PC-9 (cell line): ENCODE measurements at regions of chr5 and their contacts with region 1.

Region 1: GRCh38 chr5:1111727-1112289 is at the start of gene SLC12A7:
- DNase-seq: peak; percentile 61 to 92
- H3K4me3 ChIP-seq: peak within 1 kb of the TSS; percentile 84
- H3K27ac ChIP-seq: peak within 1 kb of the TSS; percentile 62
- H3K4me1 ChIP-seq: peaks cover 32% of the 10 kb centered on the region
- H3K27me3 ChIP-seq: no peaks in the 10 kb centered on the region
- CTCF ChIP-seq: no peak
- total RNA-seq, gene SLC12A7: 174 and 207 TPM in 2 replicates

Region 2: DNA sequence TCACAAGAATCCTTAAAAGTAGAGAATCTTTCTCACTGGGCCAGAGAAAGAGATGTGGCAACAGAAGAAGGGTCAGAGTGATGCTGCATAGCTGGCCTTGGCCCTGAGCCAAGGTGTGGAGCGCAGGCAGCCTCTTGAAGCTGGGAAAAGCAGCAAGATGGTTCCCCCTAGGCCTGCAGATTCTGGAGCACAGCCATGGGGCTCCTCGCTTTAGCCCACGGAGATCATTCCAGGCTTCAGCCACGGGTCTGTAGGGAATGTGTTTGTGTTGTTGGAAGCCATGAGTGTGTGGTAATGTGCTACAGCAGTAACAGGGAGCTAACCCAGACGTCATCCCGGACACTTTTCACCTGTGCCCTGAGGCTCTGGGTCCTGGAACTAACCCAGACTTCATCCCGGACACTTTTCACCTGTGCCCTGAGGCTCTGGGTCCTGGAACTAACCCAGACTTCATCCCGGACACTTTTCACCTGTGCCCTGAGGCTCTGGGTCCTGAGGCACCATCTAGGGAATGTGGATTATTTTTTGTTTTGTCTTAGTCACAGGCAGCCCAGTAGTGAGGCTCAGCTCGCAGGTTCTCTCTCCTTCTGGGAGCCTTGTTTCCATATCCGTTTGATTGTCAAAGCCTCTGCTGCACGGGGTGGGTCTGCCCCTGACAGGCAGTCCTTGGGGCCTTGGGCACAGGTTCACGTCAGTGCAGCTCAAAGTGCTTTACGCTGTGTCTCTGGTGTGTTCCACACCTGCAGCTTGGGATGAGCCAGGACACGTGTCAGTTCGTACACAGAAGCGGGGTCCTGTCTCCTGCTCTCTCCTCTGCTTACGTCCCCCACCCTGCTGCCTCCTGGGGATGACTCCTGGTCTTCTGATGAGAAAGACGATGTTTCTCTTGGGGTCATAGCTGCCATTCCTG is 725.1 kb before region 1 on chr5:
- CTCF ChIA-PET with region 1: no interaction called
- POLR2A ChIA-PET with region 1: no interaction called
- intact Hi-C with region 1: loop called (anchors 10 kb)
- DNase-seq: peak; percentile 87 to 96
- H3K4me3 ChIP-seq: no peak overlapping the region
- H3K27ac ChIP-seq: no peak overlapping the region
- H3K4me1 ChIP-seq: peaks cover 26% of the 10 kb centered on the region
- H3K27me3 ChIP-seq: no peaks in the 10 kb centered on the region
- CTCF ChIP-seq: no peak

Region 3: DNA sequence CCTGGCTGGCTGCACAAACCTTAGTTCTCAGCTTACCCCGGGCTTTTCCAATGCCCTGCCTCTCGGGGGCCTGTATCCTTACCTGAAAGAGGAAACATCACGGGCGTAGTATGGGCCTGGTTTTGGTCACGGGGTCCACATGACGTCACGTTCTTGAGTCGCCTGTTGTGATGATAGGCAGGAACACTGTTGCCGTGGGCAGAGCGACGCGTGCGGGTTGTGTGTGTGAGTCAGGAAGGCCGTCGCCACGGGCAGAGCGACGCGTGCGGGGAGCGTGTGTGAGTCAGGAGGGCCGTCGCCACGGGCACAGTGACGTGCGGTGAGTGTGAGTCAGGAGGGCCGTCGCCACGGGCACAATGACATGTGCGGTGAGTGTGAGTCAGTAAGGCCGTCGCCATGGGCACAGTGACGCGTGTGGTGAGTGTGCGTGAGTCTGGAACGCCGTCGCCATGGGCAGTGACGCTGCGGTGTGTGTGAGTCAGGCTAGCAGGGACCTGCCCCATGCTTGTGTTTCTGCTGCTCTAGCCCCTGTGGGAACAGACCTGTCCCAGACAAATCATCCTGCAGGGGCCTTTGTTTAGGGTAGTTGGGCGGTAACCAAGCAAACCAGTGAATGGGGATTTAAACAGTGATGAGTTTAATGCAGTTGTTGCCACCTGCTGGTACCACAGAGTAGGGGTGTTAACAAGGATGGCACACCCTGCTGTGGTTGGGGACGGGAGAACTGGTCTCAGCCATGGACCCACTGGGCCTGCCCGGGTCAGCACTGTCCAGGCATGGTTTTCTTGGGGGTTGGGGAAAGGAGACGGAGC is 199.3 kb before region 1 on chr5:
- CTCF ChIA-PET with region 1: no interaction called
- POLR2A ChIA-PET with region 1: no interaction called
- intact Hi-C with region 1: loop called (anchors 1 kb)
- DNase-seq: peak; percentile 95 to 99
- H3K4me3 ChIP-seq: peak overlapping the region; percentile 30; the same call in 1 of the 2 replicates
- H3K27ac ChIP-seq: peak overlapping the region; percentile 79
- H3K4me1 ChIP-seq: peaks cover 14% of the 10 kb centered on the region
- H3K27me3 ChIP-seq: no peaks in the 10 kb centered on the region
- CTCF ChIP-seq: peak; percentile 70

Region 4: GRCh38 chr5:1130218-1130946 is 18.6 kb after region 1 on chr5:
- CTCF ChIA-PET with region 1: interaction called, 16 read pairs
- POLR2A ChIA-PET with region 1: interaction called, 77 read pairs
- intact Hi-C with region 1: loop called (anchors 1 kb)
- DNase-seq: peak; percentile 97 to 99
- H3K4me3 ChIP-seq: peak overlapping the region; percentile 45; the same call in 1 of the 2 replicates
- H3K27ac ChIP-seq: peak overlapping the region; percentile 82
- H3K4me1 ChIP-seq: peaks cover 57% of the 10 kb centered on the region
- H3K27me3 ChIP-seq: no peaks in the 10 kb centered on the region
- CTCF ChIP-seq: peak; percentile 27; the same call in 1 of the 2 replicates

Region 5: DNA sequence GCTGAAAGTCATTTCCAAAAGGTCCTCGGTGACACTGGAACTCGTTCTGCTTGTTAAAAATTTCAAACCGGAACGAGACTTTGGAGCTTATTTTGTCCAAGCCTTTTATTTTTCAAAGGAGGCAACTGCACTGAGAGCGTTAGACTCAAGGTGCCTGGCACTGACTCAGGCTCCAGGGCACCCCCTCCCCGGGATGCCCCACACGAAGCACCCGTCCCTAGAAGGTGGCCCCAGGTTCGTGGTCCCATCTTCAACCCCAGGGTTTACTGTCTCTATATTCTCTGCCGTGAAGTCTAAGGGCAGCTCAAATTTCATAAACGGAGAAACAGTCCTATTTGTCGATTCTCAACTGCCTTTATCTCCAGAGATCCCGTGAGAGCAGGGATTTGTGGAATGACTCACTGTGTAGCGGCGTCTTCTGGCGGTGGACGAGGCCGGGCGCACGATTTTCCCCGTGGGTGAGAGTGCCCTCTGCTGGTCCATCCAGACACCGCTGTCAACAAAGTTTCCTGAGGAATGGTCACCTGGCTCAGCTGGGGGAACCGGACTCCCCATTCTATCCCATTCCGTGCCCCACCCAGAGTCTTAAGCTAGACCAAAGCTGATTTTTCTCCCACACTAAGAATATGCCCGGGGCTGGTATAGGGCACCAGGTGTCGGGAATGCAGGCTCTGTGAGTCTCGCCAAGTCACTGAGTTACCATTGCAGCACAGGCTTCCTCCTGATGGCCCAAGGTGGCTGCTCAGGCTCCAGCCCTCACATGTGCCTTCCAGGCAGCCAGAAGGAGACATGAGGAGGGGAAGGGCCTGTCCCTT is 62.5 kb after region 1 on chr5:
- CTCF ChIA-PET with region 1: no interaction called
- POLR2A ChIA-PET with region 1: no interaction called
- intact Hi-C with region 1: no loop called
- DNase-seq: peak; percentile 77 to 88
- H3K4me3 ChIP-seq: no peak overlapping the region
- H3K27ac ChIP-seq: no peak overlapping the region
- H3K4me1 ChIP-seq: no peaks in the 10 kb centered on the region
- H3K27me3 ChIP-seq: peaks cover 89% of the 10 kb centered on the region
- CTCF ChIP-seq: peak; percentile 95

Region 6: DNA sequence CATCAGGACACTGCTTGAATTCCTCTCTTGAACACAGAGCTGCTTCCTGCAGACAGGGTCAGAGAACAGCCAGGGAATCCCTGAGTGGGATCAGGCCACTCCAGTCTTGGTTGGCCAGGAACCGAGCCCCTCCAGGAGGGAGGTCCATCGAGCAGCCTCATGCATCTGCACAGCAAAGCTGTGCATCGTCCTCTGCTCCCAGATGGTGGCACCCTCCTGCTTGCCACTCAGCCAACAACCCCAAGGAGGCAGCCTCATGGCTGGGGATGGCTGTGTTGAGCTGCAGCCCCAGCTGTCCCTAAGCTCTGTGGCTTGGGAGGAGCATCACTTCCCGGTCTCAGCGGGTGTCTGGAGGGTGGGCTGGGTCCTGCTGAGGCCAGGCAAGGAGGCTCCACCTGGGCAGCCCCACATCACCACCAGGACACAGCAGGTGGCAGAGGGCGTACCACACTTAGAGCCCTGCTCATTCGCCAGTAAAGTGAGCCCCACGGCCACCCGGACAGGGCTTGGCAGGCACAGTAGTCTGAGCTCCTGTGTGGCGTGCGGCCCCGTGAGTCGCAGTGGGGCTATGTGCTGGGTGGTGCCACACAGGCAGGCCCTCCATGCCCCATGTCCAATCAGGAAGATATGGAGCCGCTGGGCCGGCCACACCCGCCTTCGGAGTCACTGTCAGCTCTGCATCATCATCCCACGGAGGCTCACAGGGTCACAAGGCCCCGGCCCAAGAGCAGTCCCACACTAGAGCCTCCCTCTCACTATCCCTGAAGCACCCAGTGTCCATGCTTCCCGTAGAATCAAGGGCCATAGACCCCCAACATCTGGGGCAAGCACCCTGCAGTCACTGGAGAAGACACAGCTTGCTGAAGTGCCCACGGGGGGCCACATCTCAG is 400.1 kb after region 1 on chr5:
- CTCF ChIA-PET with region 1: no interaction called
- POLR2A ChIA-PET with region 1: no interaction called
- intact Hi-C with region 1: loop called (anchors 10 kb)
- DNase-seq: peak; percentile 75 to 81
- H3K4me3 ChIP-seq: no peak overlapping the region
- H3K27ac ChIP-seq: no peak overlapping the region
- H3K4me1 ChIP-seq: peaks cover 51% of the 10 kb centered on the region
- H3K27me3 ChIP-seq: no peaks in the 10 kb centered on the region
- CTCF ChIP-seq: peak; percentile 66